ENCODE measurements at regions of chr7 and their contacts with region 1.

Region 1: DNA sequence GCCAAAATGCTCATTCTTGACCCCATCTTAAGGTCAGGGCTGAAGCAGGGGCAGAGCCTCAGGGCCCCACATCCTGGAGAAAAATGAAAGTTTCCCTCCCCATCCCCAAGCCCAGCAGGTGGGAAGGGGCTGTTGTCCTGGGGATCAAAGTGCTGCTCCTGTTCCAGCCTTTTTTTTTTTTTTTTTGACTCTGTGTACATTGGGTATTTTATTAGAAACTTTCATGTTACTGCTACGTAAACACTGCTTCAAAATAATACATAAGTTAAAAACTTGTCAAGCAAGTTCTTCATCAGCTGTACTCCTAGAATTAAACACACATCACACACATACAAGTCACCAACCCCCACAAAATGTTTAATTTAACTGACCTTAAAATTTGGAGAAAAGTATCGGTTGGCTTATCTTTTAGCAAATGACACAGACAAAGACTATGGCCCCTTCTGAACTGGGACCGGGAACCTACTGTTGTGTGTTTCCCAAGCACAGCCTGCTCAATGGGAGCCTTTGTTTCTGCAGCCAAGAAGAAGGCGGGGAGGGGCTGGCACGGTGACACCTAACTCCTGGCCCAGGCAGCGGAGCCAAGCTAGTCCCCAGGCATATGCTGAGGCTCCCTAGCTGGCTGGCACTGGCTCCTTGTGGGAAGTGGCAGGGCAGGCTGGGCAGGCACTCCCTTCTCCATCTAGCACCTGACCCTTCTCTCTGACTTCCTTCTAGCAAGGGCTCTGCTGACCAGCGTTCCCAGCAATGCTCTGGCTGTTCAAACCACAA is 325.2 kb downstream of the PLXNA4 start:
- DNase-seq: no peak
- H3K4me3 ChIP-seq: no peak overlapping the region
- H3K27ac ChIP-seq: no peak overlapping the region
- H3K27me3 ChIP-seq: no peaks in the 10 kb centered on the region
- CTCF ChIP-seq: no peak

Region 2: GRCh38 chr7:131945313-131945911 is 305.7 kb before region 1 on chr7:
- CTCF ChIA-PET with region 1: interaction called, 16 read pairs
- POLR2A ChIA-PET with region 1: no interaction called
- DNase-seq: no peak
- H3K4me3 ChIP-seq: no peak overlapping the region
- H3K27ac ChIP-seq: no peak overlapping the region
- H3K27me3 ChIP-seq: peaks cover 8% of the 10 kb centered on the region
- CTCF ChIP-seq: peak; percentile 85

Region 3: DNA sequence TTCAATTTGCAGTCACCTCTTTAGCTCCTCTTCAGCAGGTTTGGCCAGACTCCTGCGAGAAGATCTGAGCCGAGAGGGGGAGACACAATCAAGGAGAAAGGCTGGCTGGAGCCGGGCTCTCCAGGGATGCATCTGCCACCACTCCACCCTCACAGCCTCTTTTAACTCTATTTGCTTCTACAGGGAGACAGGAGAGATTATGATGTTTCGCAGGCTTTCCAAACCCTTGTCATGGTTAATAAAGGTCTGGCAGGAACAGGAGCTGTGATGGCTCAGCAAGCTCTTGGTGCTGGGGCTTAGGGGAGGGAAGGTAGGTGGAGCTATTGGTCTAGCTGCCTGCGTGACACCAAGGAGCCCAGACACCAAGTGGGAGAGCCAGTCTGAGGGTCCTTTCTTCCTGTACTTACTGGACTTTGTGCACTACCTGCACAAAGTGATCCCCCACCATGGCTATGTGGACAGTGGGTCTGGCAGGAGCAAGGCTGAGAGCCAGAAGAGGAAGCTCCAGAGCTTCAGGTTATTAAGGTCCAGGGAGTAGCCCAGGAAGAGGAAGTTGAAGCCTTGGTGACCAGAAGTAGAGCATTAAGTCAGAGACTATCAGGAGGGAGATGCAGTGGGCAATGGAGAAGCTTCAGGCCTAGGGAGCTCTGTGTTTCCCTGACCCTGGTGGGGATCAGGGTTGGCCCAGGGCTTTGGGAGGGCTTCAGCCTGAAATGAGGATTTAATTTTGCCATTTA is 246.4 kb before region 1 on chr7:
- CTCF ChIA-PET with region 1: interaction called, 16 read pairs
- POLR2A ChIA-PET with region 1: no interaction called
- DNase-seq: peak; percentile 3
- H3K4me3 ChIP-seq: no peak overlapping the region
- H3K27ac ChIP-seq: no peak overlapping the region
- H3K27me3 ChIP-seq: no peaks in the 10 kb centered on the region
- CTCF ChIP-seq: peak; percentile 54

Region 4: GRCh38 chr7:132279718-132280117 is 28.6 kb after region 1 on chr7:
- CTCF ChIA-PET with region 1: no interaction called
- POLR2A ChIA-PET with region 1: no interaction called
- DNase-seq: no peak
- H3K4me3 ChIP-seq: no peak overlapping the region
- H3K27ac ChIP-seq: no peak overlapping the region
- H3K27me3 ChIP-seq: no peaks in the 10 kb centered on the region
- CTCF ChIP-seq: no peak

Region 5: GRCh38 chr7:132298790-132299189 is 47.7 kb after region 1 on chr7:
- CTCF ChIA-PET with region 1: no interaction called
- POLR2A ChIA-PET with region 1: no interaction called
- DNase-seq: no peak
- H3K4me3 ChIP-seq: no peak overlapping the region
- H3K27ac ChIP-seq: no peak overlapping the region
- H3K27me3 ChIP-seq: no peaks in the 10 kb centered on the region
- CTCF ChIP-seq: no peak

Measured in AG04450 (cell line).